Right ventricle myocardium inferior (tissue), 1 donor: ENCODE measurements at regions of chrX and their contacts with region 1.

Region 1: DNA sequence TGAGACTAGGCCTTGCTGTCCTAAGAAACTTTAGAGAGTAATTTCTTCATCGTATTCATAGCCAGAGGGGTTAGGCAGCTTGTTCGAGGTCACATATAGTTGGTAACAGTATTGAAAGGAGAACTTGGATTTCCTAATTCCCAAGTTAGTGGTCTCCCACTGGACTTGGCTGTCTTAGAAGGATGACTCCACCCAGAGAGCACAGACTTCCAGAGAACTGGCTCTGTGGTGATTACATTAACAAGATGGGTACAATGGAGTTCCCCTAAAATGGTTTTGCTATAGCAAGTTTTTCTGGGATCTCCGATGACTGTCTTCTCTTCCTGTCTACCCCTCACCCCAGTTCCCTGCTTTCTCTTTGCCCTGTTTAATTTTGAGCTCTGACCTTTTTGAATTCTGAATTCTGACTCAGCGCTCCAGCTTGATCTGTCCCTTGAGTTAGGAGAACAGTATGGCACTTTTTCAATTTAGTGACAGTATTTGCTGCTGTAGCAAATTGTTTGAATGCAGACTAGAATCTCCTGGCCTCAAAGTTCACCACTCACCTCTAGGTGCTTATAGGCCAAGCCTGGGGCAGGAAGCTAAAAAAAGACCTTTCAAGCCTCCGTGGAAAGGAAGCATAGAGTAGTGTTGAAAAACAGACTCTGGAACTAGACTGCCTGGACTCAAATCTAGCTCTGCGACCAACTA is 6.9 kb downstream of the MSN start:
- DNase-seq: no peak
- ATAC-seq: peak; percentile 46

Region 2: GRCh38 chrX:65476564-65476963 is 197.8 kb before region 1 on chrX:
- intact Hi-C with region 1: no loop called
- DNase-seq: no peak
- ATAC-seq: no peak

Region 3: GRCh38 chrX:65690057-65690855 is 15.9 kb after region 1 on chrX:
- intact Hi-C with region 1: loop called (anchors 2 kb)
- DNase-seq: no peak
- ATAC-seq: peak; percentile 84